Naive thymus-derived CD4-positive, alpha-beta T cell (primary cell): ENCODE measurements at regions of chr22 and their contacts with region 1.

Region 1: GRCh38 chr22:29072193-29072978 is 449 bp upstream of the KREMEN1 start:
- DNase-seq: peak; percentile 72 to 87 (median 84)
- ATAC-seq: peak; percentile 98
- H3K4me3 ChIP-seq: peak overlapping the region; percentile 46
- H3K4me3 Mint-ChIP-seq: peak overlapping the region; percentile 69 to 90 (median 82)
- H3K27ac ChIP-seq: no peak overlapping the region
- H3K27ac Mint-ChIP-seq: peak overlapping the region in 1 of 9 donors; percentile 44
- H3K4me1 ChIP-seq: peaks cover 19 to 21% of the 10 kb centered on the region in 2 donors
- H3K4me1 Mint-ChIP-seq: peaks cover 15 to 26% (median 23%) of the 10 kb centered on the region in 7 donors
- H3K27me3 ChIP-seq: peaks cover 17 to 26% of the 10 kb centered on the region in 2 donors
- H3K27me3 Mint-ChIP-seq: peaks cover 40 to 69% (median 44%) of the 10 kb centered on the region in 5 donors

Region 2: DNA sequence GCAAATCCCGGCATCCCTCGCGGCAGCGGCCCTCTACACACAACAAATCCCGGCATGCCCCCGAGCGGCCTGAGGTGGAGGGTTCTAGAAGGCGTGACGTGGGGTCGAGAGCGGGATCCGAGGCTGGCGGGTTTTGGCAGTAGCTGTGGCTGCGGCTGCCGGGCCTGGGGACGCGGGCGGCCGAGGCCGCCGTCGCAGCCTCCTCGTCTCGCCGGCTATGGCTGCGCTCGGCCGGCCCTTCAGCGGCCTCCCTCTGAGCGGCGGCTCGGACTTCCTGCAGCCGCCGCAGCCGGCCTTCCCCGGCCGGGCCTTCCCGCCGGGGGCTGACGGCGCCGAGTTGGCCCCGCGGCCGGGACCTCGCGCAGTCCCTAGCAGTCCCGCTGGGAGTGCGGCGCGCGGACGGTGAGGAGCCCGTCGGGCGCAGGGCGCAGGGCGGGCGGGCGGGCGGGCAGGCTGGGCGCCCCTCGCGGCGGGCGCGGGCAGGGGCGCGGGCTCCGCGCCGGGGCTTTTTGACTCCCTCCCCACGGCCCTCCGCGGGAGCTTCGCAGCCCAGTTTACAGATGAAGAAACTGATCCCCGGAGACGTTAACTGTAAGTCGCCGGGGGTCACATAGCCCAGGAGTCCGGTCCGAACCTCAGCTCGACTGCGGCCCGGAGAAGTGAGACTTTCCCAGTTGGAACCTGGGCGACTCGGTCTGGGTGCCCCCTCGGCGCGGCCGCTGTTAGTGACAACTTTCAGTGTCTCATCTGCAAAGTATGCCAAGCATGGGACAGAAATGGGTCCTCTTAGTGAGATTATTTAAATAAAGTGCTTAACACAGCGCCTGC is 299.5 kb before region 1 on chr22 and contains the start of gene CCDC117:
- CTCF ChIA-PET with region 1: no interaction called
- POLR2A ChIA-PET with region 1: no interaction called
- intact Hi-C with region 1: loop called in 1 of 2 experiments (anchors 5 kb)
- DNase-seq: peak; percentile 76 to 93 (median 88)
- ATAC-seq: peak; percentile 97
- H3K4me3 ChIP-seq: peak within 1 kb of the TSS; percentile 83
- H3K4me3 Mint-ChIP-seq: peak within 1 kb of the TSS; percentile 84 to 100 (median 97)
- H3K27ac ChIP-seq: peak within 1 kb of the TSS; percentile 91
- H3K27ac Mint-ChIP-seq: peak within 1 kb of the TSS; percentile 86 to 98 (median 91)
- H3K4me1 ChIP-seq: peaks cover 13 to 17% of the 10 kb centered on the region in 2 donors
- H3K4me1 Mint-ChIP-seq: peaks cover 17 to 46% (median 31%) of the 10 kb centered on the region in 7 donors
- H3K27me3 ChIP-seq: no peaks in the 10 kb centered on the region
- H3K27me3 Mint-ChIP-seq: peaks cover 0 to 2% (median 0%) of the 10 kb centered on the region in 5 donors
- total RNA-seq, gene CCDC117: 13.5 to 33.5 (median 21.2) TPM

Region 3: GRCh38 chr22:29108109-29108508 is 35.7 kb after region 1 on chr22:
- CTCF ChIA-PET with region 1: no interaction called
- POLR2A ChIA-PET with region 1: no interaction called
- intact Hi-C with region 1: no loop called
- DNase-seq: no peak
- ATAC-seq: no peak
- H3K4me3 ChIP-seq: no peak overlapping the region
- H3K4me3 Mint-ChIP-seq: no peak overlapping the region
- H3K27ac ChIP-seq: no peak overlapping the region
- H3K27ac Mint-ChIP-seq: no peak overlapping the region
- H3K4me1 ChIP-seq: no peaks in the 10 kb centered on the region
- H3K4me1 Mint-ChIP-seq: no peaks in the 10 kb centered on the region
- H3K27me3 ChIP-seq: no peaks in the 10 kb centered on the region
- H3K27me3 Mint-ChIP-seq: peaks cover 6 to 25% (median 12%) of the 10 kb centered on the region in 5 donors

Region 4: DNA sequence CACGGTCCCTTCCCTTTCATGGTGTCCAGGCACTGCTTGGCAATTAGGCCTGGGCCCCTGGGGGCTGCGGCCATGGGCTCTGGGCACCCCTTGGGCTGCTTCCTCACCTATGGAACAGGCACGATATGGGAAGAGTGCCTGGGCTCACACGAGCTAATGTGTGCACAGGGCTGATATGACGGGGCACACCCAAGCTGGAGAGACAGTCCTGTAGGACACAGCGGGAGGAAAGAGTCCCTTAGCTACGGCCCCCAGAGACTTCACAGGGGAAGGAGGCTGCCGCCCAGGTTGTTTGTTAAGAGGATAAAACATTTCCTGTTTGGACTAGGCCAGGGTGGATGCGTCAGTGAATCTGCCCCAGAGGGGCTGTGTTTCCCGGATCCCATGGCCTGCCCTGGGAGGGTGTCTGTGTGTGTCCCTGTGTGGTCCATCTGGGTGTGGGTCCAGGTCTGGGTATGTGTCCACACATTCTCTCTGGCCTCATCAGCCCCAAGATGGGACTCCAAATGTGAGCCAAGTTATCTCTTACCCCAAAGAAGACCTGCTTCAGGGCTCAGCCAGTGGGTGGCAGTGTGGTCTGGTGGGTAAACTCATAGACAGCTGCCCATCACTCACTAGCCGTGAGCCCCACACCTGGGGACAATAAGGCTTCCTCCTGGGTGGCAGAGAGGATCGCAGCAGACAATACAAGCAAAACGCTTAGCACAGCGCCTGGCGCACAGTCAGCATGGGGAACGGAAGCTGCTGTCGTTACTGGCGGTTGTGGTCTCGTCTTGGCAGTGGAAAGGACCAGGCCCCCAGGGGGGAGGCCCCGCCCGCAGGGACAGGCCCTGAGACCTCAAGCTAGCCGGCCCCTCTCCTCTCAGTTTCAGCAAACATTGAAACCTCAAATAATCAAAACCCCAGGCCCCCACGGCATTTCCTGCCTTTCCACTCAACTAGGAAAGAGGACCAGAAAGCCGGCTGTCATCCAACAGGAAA is 130.1 kb after region 1 on chr22:
- CTCF ChIA-PET with region 1: no interaction called
- POLR2A ChIA-PET with region 1: no interaction called
- intact Hi-C with region 1: no loop called
- DNase-seq: peak in 3 of 9 donors; percentile 2 to 58 (median 3)
- ATAC-seq: peak; percentile 73
- H3K4me3 ChIP-seq: no peak overlapping the region
- H3K4me3 Mint-ChIP-seq: peak overlapping the region in 2 of 10 donors; percentile 13 to 72
- H3K27ac ChIP-seq: no peak overlapping the region
- H3K27ac Mint-ChIP-seq: peak overlapping the region in 1 of 9 donors; percentile 65
- H3K4me1 ChIP-seq: peaks cover 4 to 9% of the 10 kb centered on the region in 2 donors
- H3K4me1 Mint-ChIP-seq: peaks cover 13 to 28% (median 15%) of the 10 kb centered on the region in 7 donors
- H3K27me3 ChIP-seq: peaks cover 0 to 3% of the 10 kb centered on the region in 2 donors
- H3K27me3 Mint-ChIP-seq: peaks cover 35 to 64% (median 51%) of the 10 kb centered on the region in 5 donors